Ovary (tissue), 10 donors: ENCODE measurements at regions of chr12 and their contacts with region 1.

Region 1: DNA sequence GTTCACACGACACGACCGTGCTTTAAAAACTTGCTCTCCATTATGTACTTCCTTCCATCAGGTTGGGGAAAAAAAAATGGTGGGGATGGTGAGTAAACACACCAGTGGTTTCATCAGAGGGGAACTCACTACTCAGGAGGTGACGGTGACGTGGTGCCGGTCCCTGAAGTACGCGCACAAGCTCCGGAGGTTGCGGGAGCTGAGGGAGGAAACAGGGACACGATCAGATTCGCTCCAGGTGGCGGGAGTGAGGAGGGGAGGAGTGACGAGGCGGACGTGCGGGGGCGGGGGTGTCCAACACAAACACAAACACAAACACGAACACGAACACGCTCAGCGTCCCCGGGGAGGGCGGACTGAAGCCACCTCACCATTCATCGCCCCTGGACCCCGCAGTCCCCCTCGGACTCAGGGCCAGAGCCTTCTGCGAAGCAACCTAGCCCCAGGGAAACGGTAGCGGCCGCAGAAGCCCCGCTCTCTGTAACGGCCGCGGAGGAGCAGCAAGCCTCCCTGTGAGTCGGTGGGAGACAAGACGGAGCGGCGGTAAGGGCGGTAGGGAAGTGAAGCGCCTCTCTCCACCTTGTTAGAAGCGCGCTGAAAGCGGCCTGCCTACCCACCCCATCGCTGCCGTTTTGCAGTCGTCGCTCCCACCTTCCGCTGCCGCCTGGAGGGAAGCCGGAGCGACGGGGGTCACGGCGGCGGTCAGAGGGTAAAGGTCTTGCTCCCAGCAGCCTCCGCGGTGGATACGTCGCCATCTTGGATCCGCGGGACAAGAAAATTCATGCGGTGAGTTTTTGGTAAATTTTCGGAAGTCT is at the start of gene CNOT2:
- DNase-seq: peak; percentile 87 to 95 (median 90)
- H3K4me3 ChIP-seq: peak within 1 kb of the TSS; percentile 77
- H3K27ac ChIP-seq: peak within 1 kb of the TSS; percentile 92 to 94
- H3K4me1 ChIP-seq: peaks cover 3% of the 10 kb centered on the region
- H3K27me3 ChIP-seq: no peaks in the 10 kb centered on the region
- CTCF ChIP-seq: no peak
- EP300 ChIP-seq: no peak
- POLR2A ChIP-seq: peak; percentile 49
- total RNA-seq, gene CNOT2: 51.9 to 115 (median 70.1) TPM

Region 2: DNA sequence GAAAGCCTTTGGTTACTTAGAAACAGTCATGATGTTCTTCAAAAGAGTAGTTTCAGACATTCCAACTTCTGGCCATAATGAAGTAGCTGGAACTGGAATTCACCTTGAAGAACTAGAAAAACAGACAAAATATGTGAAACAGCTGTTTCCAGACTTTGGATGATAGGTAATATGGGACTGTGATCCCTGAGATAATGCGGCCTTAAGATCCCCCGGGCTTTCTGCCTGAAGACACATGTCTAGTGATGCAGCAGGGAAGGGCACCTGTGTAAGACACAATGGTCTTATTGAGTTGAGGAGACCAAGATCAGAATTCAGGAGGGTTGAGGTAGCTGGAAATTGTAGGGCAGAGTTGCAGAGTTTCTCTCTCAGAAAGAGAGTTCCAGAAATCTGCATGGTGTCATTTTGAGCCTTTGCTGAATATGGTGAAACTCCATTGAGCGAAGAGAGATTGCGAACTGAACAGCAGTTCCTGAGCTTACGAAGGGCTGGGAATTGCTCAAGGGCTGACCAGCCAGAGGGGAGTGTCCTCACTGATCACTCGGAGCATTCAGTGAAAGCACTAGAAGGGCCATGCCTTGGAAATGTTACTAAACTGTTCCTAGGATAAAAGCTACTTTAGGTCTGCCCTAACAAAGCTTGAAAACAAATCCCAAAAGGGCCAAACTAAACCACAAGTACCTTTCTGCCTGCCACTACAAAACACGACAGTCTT is 814.4 kb before region 1 on chr12:
- intact Hi-C with region 1: no loop called
- DNase-seq: no peak
- H3K4me3 ChIP-seq: no peak overlapping the region
- H3K27ac ChIP-seq: no peak overlapping the region
- H3K4me1 ChIP-seq: no peaks in the 10 kb centered on the region
- H3K27me3 ChIP-seq: no peaks in the 10 kb centered on the region
- CTCF ChIP-seq: no peak
- EP300 ChIP-seq: no peak
- POLR2A ChIP-seq: no peak

Region 3: GRCh38 chr12:70365648-70366518 is 123.0 kb after region 1 on chr12 and contains the start of gene KCNMB4:
- intact Hi-C with region 1: loop called in 1 of 4 experiments (anchors 10 kb)
- DNase-seq: peak; percentile 35 to 76 (median 61)
- H3K4me3 ChIP-seq: peak within 1 kb of the TSS; percentile 65
- H3K27ac ChIP-seq: no peak within 1 kb of the TSS
- H3K4me1 ChIP-seq: peaks cover 3% of the 10 kb centered on the region
- H3K27me3 ChIP-seq: no peaks in the 10 kb centered on the region
- CTCF ChIP-seq: no peak
- EP300 ChIP-seq: no peak
- POLR2A ChIP-seq: no peak
- total RNA-seq, gene KCNMB4: 2.0 to 5.6 (median 3.0) TPM